ENCODE measurements at regions of chr14 and their contacts with region 1.

Region 1: DNA sequence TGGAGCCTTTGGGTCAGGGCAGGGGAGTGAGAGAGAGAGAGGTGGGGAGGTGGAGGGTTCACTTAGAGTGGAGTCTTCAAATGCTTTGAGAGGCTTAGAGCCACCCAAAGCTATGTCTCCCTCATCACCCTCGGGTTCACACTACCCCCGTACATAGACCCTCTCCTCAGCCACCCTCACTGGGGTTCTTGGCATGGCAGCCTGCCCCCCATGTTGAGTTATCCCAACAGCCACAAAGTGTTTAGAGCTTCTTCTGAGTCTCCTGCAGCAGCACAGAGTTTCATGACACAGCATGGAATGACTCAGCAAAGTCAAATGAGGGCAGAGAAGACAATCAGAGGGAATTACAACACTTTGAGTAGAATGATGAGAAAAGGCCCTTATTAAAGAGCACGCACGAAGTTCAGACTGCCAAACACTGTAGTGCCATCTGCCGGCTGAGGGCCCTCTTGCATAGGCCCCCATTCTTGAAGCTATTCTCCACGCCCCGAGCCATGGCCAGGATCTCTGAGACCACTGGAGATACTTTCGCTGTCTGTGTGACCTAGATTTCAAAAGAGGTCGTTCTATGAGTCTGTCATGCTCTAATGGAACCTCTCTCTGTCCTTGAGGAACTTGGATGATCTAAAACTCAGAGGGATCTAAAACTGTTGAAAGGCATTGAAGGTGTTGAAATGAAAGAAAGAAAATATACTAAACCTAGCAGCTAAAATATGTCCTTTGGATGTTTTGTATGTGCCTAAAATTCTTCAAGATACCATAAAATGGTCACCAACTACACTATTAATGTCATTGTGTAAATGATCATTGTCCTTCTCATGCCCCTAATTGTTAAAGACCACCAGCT is 221.9 kb downstream of the PELI2 start:
- DNase-seq: peak; percentile 87
- H3K4me3 ChIP-seq: no peak overlapping the region
- CTCF ChIP-seq: peak; percentile 93

Region 2: DNA sequence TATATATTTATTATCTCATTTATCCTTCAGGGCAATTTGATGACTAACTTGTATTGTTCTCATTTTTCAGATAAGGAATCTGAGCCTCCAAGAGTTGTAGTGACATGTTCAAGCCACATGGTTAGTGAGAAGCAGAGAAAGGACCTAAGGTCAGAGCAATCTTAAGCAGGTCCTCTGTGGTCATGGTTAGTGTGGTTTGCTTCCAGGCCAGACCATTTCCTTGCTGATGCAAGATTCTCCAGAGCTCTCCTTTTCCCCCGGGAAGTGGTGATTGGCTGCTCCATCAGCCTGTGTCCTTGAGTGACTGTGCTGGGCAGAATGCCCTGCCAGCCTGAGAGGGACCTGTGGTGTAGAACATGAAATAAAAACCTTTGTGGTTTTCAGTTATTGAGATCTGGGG is 618.7 kb before region 1 on chr14:
- CTCF ChIA-PET with region 1: interaction called, 14 read pairs
- POLR2A ChIA-PET with region 1: no interaction called
- DNase-seq: peak; percentile 52
- H3K4me3 ChIP-seq: no peak overlapping the region
- CTCF ChIP-seq: no peak

Region 3: GRCh38 chr14:56117765-56118610 is 222.1 kb before region 1 on chr14 and contains the start of gene PELI2:
- CTCF ChIA-PET with region 1: interaction called, 16 read pairs
- POLR2A ChIA-PET with region 1: no interaction called
- DNase-seq: no peak
- H3K4me3 ChIP-seq: peak within 1 kb of the TSS; percentile 68
- CTCF ChIP-seq: peak; percentile 62

Region 4: DNA sequence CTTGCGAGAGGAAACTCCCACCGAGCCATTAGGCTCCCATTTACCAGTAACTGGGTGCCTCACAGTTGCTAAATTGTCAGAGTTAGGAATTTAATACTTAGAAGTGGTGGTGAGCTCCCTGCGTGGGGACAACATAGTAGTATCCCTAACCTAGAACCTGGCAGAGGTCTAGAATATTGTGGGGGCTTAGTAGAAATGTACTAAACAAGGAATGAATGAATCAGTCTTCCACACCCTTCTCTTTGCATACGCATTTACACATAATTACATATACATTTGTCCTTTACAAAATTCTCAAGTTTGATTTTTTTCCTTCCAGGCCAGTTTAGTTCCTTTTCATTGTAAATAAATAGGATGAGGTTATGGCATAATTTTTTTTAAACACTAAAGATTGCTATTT is 197.8 kb before region 1 on chr14:
- CTCF ChIA-PET with region 1: no interaction called
- POLR2A ChIA-PET with region 1: no interaction called
- DNase-seq: no peak
- H3K4me3 ChIP-seq: no peak overlapping the region
- CTCF ChIP-seq: no peak

Region 5: DNA sequence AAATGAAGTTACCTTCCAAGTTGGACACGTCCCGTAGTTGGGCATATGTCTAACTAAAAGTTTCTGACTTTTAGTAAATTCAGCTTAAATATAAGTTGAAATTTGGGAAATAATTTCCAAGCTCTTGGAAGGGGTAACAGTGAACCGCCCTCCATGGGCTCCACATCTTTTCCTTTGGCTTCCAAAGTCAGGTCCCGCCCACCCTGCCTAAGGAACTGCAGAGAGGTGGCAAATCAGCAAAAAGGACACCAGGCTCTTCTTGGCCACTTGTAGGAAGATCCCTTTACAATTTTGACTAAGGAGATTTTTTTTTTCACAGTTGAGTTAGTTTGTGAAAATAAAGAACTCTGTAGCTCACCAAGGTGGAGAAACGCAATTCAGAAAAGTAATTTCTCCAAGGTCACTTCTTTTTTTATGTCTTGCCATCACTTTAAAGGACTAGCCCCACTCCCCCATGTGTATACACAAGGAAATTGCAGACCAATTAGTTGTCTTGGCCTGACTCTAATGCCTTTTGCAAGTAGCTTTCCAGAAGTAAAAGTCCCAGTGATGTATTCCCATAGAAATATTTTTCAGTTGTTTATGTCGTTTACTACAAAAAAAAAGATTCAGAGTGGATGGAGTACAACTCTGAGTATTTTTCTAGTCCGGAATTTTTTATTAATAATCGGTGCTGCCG is 40.6 kb before region 1 on chr14:
- CTCF ChIA-PET with region 1: interaction called, 10 read pairs
- POLR2A ChIA-PET with region 1: no interaction called
- DNase-seq: no peak
- H3K4me3 ChIP-seq: no peak overlapping the region
- CTCF ChIP-seq: no peak

Region 6: DNA sequence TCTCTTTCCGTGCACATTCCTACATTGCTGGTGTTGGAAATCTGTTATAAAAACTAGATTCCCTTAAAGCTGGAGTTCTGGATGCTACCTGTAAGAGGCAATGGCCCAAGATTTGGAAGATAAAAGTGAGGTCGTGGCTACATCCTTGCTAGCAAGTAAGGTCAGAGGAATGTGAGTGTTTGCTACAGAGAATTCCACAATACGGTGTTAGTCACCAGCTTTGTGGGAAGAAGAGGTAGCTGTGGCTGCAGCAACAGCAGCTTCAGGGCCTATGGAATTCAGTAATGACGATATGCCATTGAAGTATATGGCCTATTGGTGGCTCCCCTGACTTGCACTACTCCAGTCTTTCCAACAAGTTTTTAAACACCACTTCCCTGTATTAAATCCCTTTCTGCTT is 11.8 kb after region 1 on chr14:
- CTCF ChIA-PET with region 1: interaction called, 19 read pairs
- POLR2A ChIA-PET with region 1: no interaction called
- DNase-seq: peak; percentile 71
- H3K4me3 ChIP-seq: no peak overlapping the region
- CTCF ChIP-seq: no peak